Activated CD4-positive, alpha-beta T cell treated with anti-CD3 and anti-CD28 coated beads, Interleukin-2, amount 10 ng/mL, durations not matched to agents 24 days and 14 days (primary cell): ENCODE measurements at regions of chr20 and their contacts with region 1.

Region 1: DNA sequence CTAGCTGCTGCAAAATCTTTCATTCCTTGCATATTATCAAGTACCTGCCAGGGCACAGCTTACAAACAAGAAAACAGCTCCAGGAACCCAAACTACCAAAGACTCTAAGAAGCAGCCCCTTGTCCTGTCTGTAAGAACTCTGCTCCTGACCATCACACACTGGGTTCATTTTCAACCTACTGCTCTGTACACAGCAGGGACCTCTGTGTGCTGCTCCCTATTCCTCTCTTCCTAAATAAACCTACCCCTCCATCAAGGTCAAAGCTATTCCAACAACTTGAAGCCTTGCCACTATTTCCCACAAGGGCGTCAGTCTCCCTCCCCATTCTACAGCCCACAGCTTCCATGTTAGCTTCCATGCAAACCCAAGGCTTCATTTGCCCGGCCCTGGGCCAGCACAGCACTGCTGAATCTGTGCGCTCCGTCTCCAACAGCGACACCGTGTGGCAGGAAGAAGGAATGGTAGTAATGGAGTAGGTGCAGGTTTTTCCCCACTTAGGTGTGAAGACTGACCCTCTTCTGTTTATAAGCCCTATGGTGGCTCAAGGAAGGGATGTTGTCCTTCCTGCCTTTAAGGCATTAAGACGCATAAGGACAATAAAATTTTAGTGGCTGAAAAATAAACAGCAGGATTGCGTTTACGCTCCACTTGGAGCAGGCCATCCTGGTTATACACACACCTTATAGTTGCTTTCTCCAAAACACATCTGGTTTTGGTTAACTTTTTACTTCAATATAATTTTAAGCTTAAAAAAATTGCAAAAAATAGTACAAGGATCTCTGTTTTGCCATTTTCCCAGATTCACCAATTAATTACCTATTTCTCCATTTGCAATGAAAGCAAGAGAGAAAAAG is 115.2 kb upstream of the NXT1 start:
- DNase-seq: peak; percentile 84
- H3K4me3 Mint-ChIP-seq: no peak overlapping the region
- H3K27ac Mint-ChIP-seq: no peak overlapping the region
- H3K4me1 Mint-ChIP-seq: no peaks in the 10 kb centered on the region
- H3K27me3 Mint-ChIP-seq: peaks cover 21% of the 10 kb centered on the region

Region 2: DNA sequence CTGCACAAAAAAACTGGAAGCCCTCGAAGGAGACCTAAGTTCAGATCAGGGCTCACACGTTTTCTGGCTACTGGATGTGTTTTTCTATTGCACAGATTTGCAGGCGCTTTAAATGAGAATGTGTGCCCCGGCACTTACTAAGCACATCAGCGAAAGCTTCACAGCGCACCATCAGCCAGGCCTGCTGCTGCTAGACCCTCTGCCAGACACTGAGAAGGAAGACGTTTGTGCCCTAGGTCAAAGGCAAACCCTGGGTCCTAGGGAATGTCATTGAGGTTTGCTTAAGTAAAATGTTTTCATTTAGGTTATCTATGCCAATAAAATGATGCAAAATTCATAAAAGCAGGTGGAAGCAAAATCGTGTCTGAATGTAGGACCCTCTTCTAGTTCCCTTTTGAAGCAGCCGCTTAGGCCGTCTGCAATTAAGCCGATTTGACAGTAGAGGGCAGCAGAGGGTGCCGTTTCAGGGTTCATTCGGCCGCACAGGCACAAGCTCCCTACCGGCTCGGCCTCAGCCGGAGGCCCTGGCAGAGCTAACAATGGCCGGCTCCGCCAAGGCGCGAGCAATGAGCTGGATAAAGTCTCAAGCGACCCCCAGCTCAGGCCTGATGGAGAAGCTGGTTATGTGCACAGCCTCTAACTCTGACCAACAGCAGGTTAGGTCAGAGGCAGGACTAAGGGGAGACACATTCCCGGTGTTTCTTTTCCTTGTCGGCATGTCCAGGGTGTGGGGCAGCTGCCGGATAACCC is 543.9 kb before region 1 on chr20:
- intact Hi-C with region 1: loop called (anchors 1 kb)
- DNase-seq: peak; percentile 86
- H3K4me3 Mint-ChIP-seq: no peak overlapping the region
- H3K27ac Mint-ChIP-seq: no peak overlapping the region
- H3K4me1 Mint-ChIP-seq: no peaks in the 10 kb centered on the region
- H3K27me3 Mint-ChIP-seq: no peaks in the 10 kb centered on the region

Region 3: DNA sequence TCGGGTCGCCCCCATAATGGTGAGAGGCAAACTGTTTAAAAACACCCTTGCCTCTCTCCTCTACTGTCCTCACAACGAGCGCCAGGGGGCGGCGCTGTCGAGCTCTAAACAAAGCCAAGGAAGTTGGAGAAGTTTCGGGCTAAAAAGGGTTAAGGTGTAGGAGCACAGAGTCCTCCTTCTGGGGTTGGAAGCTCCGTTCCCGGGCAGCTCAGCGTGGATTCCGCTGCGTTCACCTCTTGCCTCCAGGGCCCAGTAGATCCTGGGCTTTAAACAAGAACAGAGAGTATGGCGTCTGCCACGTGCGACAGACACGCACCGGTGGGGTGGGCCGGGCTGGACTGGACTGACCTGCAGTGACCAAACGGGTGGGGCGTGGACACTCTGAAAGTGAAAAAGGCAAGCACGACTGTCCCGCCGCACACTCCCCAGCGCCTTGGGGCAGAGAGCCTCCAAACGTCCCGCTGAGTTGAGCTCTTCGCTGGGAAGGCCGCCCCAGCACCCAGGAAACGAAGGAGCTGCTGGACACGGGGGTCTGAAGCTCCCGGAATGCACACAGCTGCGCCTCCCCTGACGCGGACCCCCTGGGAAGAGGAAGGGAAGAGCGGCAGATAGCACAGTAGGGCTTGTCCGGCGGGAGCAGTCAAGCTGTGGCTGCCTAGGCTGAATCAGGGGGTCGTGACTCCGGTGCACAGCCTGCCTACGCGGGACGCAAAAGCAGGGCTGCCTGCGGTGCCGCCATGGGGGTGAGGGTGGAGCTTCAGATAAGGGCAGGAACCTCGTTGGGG is 184.4 kb before region 1 on chr20:
- intact Hi-C with region 1: loop called (anchors 2 kb)
- DNase-seq: peak; percentile 83
- H3K4me3 Mint-ChIP-seq: no peak overlapping the region
- H3K27ac Mint-ChIP-seq: no peak overlapping the region
- H3K4me1 Mint-ChIP-seq: peaks cover 4% of the 10 kb centered on the region
- H3K27me3 Mint-ChIP-seq: peaks cover 62% of the 10 kb centered on the region